ENCODE measurements at regions of chr1 and their contacts with region 1.

Region 1: DNA sequence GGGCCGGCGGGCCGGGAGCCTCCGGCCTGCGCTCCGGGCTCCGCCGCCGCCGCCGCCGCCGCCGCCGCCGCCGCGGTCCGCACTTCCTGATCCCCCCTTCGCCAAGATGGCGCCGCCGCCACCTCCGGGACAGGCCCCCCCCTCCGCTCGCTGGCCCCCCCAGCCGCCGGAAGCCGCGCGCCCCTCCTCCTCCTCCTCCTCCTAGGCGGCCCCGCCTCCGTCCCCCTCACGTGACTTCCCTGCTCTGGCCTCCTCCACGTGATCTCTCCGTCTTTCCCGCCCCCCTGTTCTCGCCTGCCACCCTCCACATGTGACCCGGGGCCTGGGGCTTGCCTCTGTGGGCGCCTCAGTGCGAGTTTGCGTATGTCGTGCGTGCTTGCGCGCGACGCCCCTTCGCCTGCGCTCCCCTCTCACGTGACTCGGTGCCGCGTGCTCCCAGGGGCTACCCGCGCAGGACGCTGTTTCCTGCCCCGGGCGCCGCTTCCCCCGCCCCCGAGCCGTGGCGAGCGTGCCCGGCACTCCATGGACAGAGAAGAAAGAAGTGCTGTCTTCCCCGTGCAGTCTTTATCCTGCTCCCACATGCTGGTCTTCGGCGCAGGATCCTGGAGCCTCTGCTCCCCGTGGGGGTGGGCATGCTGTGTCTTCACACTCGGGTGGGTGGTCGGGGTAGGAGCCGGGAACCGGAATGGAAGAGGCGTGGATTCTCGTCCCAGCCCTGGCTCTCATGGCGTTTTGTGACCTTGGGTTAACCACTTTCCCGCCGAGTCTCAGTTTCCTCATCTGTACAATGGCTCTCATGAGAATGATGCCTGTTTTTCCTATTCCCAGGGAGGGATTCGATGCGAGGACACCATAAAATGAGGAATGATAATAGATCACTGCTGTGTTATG is at the start of gene UBE2Q1:
- DNase-seq: peak; percentile 99
- H3K4me3 Mint-ChIP-seq: peak within 1 kb of the TSS; percentile 91
- H3K27ac Mint-ChIP-seq: peak within 1 kb of the TSS; percentile 92
- H3K4me1 Mint-ChIP-seq: peaks cover 28% of the 10 kb centered on the region
- H3K27me3 Mint-ChIP-seq: no peaks in the 10 kb centered on the region
- total RNA-seq, gene UBE2Q1: 79.2 to 84.6 TPM

Region 2: DNA sequence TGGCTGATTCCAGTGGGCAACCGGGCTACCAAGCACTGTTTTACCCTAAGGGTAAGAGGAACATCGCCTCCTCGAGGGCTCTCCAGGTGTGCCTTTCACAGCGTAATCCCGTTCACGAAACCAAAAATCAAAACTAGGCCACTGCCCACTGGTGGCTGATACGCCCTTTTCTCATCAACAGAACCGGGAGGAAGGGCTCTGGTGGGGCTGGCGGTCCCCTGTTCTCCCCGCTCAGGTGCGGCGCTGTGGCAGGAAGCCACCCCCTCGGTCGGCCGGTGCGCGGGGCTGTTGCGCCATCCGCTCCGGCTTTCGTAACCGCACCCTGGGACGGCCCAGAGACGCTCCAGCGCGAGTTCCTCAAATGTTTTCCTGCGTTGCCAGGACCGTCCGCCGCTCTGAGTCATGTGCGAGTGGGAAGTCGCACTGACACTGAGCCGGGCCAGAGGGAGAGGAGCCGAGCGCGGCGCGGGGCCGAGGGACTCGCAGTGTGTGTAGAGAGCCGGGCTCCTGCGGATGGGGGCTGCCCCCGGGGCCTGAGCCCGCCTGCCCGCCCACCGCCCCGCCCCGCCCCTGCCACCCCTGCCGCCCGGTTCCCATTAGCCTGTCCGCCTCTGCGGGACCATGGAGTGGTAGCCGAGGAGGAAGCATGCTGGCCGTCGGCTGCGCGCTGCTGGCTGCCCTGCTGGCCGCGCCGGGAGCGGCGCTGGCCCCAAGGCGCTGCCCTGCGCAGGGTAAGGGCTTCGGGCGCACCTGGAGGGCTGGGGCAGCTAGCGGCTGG is 153.6 kb before region 1 on chr1 and contains the start of gene IL6R:
- CTCF ChIA-PET with region 1: no interaction called
- intact Hi-C with region 1: loop called (anchors 1 kb)
- DNase-seq: peak; percentile 87
- H3K4me3 Mint-ChIP-seq: peak within 1 kb of the TSS; percentile 94
- H3K27ac Mint-ChIP-seq: peak within 1 kb of the TSS; percentile 96
- H3K4me1 Mint-ChIP-seq: peaks cover 77% of the 10 kb centered on the region
- H3K27me3 Mint-ChIP-seq: no peaks in the 10 kb centered on the region
- total RNA-seq, gene IL6R: 17.3 to 25.9 TPM

Region 3: DNA sequence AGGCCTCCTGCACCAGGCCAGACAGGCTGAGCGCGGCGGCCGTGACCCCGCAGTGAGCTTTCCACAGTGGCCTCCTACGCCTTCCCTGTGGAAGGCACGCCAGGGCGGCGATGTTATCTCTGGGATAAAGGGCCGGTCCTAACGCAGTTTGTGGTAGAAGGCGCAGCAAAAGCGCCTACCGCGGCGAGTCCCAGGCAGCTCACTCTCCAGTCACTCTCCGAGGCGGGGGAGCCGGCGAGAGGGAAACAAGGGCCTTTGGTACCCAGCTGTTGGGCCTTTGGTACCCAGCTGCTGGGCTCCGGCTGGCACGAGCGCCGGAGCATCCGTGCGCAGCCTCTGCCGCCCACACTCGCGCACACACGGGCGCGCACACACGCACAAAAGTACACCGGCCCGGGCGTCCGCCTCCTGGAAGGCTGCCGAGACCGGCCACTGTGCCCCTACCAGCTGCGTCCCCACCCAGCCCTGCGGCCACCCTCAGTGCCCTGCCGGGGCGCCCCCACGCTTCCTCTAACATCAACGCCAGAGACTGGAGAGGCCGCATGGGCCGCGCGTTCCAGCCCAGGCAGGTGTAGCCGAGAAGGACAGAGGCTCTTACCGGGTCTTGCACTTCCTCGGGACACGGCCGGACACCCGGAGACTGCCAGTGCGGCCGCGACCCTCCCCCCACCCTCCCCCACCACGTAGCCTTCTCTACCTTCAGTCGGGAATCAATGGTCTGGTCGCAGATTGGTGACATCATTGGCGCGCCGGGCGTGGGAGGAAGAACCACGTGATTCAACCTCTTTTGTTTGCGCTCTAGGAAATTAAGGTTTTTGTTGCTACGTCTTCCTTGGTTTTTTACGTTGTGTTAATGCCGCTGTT is 68.7 kb after region 1 on chr1:
- CTCF ChIA-PET with region 1: no interaction called
- intact Hi-C with region 1: loop called (anchors 1 kb)
- DNase-seq: peak; percentile 97
- H3K4me3 Mint-ChIP-seq: peak overlapping the region; percentile 98
- H3K27ac Mint-ChIP-seq: peak overlapping the region; percentile 99
- H3K4me1 Mint-ChIP-seq: peaks cover 41% of the 10 kb centered on the region
- H3K27me3 Mint-ChIP-seq: no peaks in the 10 kb centered on the region

Region 4: GRCh38 chr1:154760469-154760933 is 201.7 kb after region 1 on chr1:
- CTCF ChIA-PET with region 1: interaction called, 14 read pairs
- intact Hi-C with region 1: loop called (anchors 1 kb)
- DNase-seq: peak; percentile 85
- H3K4me3 Mint-ChIP-seq: peak overlapping the region; percentile 75
- H3K27ac Mint-ChIP-seq: peak overlapping the region; percentile 99
- H3K4me1 Mint-ChIP-seq: peaks cover 56% of the 10 kb centered on the region
- H3K27me3 Mint-ChIP-seq: no peaks in the 10 kb centered on the region

Region 5: DNA sequence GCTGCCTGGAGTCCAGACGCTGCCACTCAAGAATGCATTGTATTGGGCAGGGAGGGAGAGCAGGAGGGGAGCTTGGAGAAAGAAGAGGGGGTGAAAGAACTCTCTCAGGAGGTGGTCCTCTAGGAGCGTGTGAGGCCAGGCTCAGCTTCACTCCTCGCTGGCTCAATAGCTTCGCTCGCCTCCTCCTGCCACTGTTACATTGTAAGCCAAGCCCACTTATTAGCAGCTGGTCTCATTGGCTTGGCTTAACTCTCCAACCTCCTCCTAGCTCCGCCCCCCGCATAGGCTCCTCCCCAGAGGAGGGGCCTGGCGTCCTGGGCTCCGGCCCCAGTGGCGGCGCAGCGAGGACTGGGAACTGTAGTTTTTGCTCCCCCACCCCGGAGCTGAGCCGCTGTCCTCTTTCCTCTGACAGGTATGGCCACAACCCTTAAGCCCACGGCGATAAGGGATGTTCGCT is 311.3 kb after region 1 on chr1 and contains the start of gene KCNN3:
- CTCF ChIA-PET with region 1: interaction called, 7 read pairs
- intact Hi-C with region 1: loop called (anchors 2 kb)
- DNase-seq: peak; percentile 84
- H3K4me3 Mint-ChIP-seq: peak within 1 kb of the TSS; percentile 5
- H3K27ac Mint-ChIP-seq: no peak within 1 kb of the TSS
- H3K4me1 Mint-ChIP-seq: peaks cover 34% of the 10 kb centered on the region
- H3K27me3 Mint-ChIP-seq: peaks cover 35% of the 10 kb centered on the region
- total RNA-seq, gene KCNN3: 0.25 to 0.26 TPM

Region 6: GRCh38 chr1:155063550-155064110 is 504.8 kb after region 1 on chr1 and contains the start of gene EFNA4:
- CTCF ChIA-PET with region 1: no interaction called
- intact Hi-C with region 1: loop called (anchors 1 kb)
- DNase-seq: peak; percentile 89
- H3K4me3 Mint-ChIP-seq: peak within 1 kb of the TSS; percentile 86
- H3K27ac Mint-ChIP-seq: no peak within 1 kb of the TSS
- H3K4me1 Mint-ChIP-seq: peaks cover 30% of the 10 kb centered on the region
- H3K27me3 Mint-ChIP-seq: no peaks in the 10 kb centered on the region
- total RNA-seq, gene EFNA4: 3.3 to 4.5 TPM

Measured in activated naive CD4-positive, alpha-beta T cell treated with anti-CD3 and anti-CD28 coated beads for 36 hours (primary cell).